ENCODE measurements at regions of chr17 and their contacts with region 1.

Region 1: GRCh38 chr17:7136266-7136877 is 21.8 kb upstream of the ASGR2 start:
- DNase-seq: peak; percentile 34
- H3K4me3 ChIP-seq: no peak overlapping the region
- H3K27ac ChIP-seq: no peak overlapping the region
- H3K27me3 ChIP-seq: peaks cover 53% of the 10 kb centered on the region
- CTCF ChIP-seq: peak; percentile 96

Region 2: DNA sequence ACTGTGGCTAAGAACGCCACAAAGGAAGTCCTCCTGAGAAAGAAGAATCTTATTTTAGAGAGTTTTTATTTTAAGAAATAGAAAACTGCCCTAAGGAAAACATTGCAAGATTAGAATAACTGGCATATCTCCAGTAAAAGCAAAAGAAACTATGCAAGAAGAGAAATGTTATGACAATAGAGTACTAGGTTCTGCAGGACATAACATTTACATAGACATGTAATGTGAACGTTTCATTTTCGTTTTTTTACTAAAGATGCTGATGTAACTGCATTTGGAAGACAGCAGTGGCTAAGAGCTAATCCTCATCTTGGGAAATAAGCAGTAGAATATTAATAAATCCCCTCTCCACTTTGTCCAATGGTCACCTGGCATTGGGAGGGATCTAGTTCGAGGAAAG is 14.0 kb before region 1 on chr17:
- CTCF ChIA-PET with region 1: interaction called, 10 read pairs
- POLR2A ChIA-PET with region 1: no interaction called
- DNase-seq: no peak
- H3K4me3 ChIP-seq: no peak overlapping the region
- H3K27ac ChIP-seq: no peak overlapping the region
- H3K27me3 ChIP-seq: peaks cover 9% of the 10 kb centered on the region
- CTCF ChIP-seq: no peak

Region 3: GRCh38 chr17:7177196-7177953 is 41.0 kb after region 1 on chr17:
- CTCF ChIA-PET with region 1: interaction called, 11 read pairs
- POLR2A ChIA-PET with region 1: no interaction called
- DNase-seq: peak; percentile 37
- H3K4me3 ChIP-seq: peak overlapping the region; percentile 70
- H3K27ac ChIP-seq: no peak overlapping the region
- H3K27me3 ChIP-seq: no peaks in the 10 kb centered on the region
- CTCF ChIP-seq: peak; percentile 85

Measured in AG04450 (cell line).